A673 (cell line): ENCODE measurements at regions of chr2 and their contacts with region 1.

Region 1: DNA sequence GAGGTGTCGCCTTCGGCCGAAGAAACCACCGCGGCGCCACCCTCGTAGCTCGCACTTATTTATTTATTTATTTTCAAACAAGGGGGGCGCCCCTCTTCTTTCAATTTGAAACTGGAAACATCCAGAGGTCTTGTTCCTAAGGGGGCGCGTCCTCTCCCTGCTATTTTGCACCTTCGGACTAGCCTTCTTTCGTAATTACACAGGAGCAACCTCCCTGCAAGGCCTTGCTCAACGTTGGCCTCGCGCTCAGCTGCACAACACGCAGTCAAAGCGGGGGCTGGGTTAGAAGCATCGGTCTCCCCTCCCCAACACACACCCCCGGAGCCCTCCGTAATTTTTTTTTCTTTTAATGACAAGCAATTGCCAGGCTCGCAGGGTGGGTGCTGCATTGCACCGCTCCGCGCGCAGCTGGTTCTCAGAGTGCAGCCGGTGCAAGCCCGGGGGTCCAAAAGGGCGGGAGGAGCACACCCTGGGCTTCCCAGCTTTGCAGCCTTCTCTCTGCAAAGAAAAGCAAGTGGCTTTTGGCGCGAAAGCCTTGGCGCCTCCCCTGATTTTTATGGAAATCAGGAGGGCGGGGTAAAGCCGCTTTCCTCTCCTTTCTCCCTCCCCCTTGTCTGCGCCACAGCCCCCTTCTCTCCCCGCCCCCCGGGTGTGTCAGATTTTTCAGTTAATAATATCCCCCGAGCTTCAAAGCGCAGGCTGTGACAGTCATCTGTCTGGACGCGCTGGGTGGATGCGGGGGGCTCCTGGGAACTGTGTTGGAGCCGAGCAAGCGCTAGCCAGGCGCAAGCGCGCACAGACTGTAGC is at the start of gene MYCN:
- DNase-seq: peak; percentile 95
- H3K4me3 ChIP-seq: peak within 1 kb of the TSS; percentile 60
- H3K27ac ChIP-seq: no peak within 1 kb of the TSS
- H3K4me1 ChIP-seq: peaks cover 19% of the 10 kb centered on the region
- H3K27me3 ChIP-seq: no peaks in the 10 kb centered on the region
- CTCF ChIP-seq: peak; percentile 89; the same call in 1 of the 2 replicates
- total RNA-seq, gene MYCN: 2.8 and 3.4 TPM in 2 replicates

Region 2: GRCh38 chr2:15636972-15637785 is 302.9 kb before region 1 on chr2:
- CTCF ChIA-PET with region 1: no interaction called
- POLR2A ChIA-PET with region 1: no interaction called
- intact Hi-C with region 1: loop called (anchors 5 kb)
- DNase-seq: peak; percentile 79
- H3K4me3 ChIP-seq: no peak overlapping the region
- H3K27ac ChIP-seq: no peak overlapping the region
- H3K4me1 ChIP-seq: peaks cover 9% of the 10 kb centered on the region
- H3K27me3 ChIP-seq: no peaks in the 10 kb centered on the region
- CTCF ChIP-seq: peak; percentile 92

Region 3: GRCh38 chr2:16281451-16282336 is 341.6 kb after region 1 on chr2:
- CTCF ChIA-PET with region 1: interaction called, 36 read pairs
- POLR2A ChIA-PET with region 1: no interaction called
- intact Hi-C with region 1: loop called (anchors 1 kb)
- DNase-seq: peak; percentile 71
- H3K4me3 ChIP-seq: no peak overlapping the region
- H3K27ac ChIP-seq: no peak overlapping the region
- H3K4me1 ChIP-seq: no peaks in the 10 kb centered on the region
- H3K27me3 ChIP-seq: no peaks in the 10 kb centered on the region
- CTCF ChIP-seq: peak; percentile 73

Region 4: GRCh38 chr2:16507655-16508489 is 567.8 kb after region 1 on chr2:
- CTCF ChIA-PET with region 1: no interaction called
- POLR2A ChIA-PET with region 1: no interaction called
- intact Hi-C with region 1: loop called (anchors 1 kb)
- DNase-seq: peak; percentile 72
- H3K4me3 ChIP-seq: peak overlapping the region; percentile 47
- H3K27ac ChIP-seq: no peak overlapping the region
- H3K4me1 ChIP-seq: no peaks in the 10 kb centered on the region
- H3K27me3 ChIP-seq: no peaks in the 10 kb centered on the region
- CTCF ChIP-seq: peak; percentile 80

Region 5: GRCh38 chr2:16756831-16757644 is 817.0 kb after region 1 on chr2:
- CTCF ChIA-PET with region 1: no interaction called
- POLR2A ChIA-PET with region 1: no interaction called
- intact Hi-C with region 1: loop called (anchors 5 kb)
- DNase-seq: peak; percentile 85
- H3K4me3 ChIP-seq: no peak overlapping the region
- H3K27ac ChIP-seq: peak overlapping the region; percentile 60
- H3K4me1 ChIP-seq: peaks cover 8% of the 10 kb centered on the region
- H3K27me3 ChIP-seq: no peaks in the 10 kb centered on the region
- CTCF ChIP-seq: peak; percentile 93